MCF 10A (cell line): ENCODE measurements at regions of chr2 and their contacts with region 1.

Region 1: GRCh38 chr2:222707689-222708525 is 36.4 kb downstream of the MOGAT1 start:
- DNase-seq: peak; percentile 71
- H3K4me3 Mint-ChIP-seq: no peak overlapping the region
- H3K27ac Mint-ChIP-seq: no peak overlapping the region
- H3K4me1 Mint-ChIP-seq: peaks cover 5% of the 10 kb centered on the region
- H3K27me3 Mint-ChIP-seq: no peaks in the 10 kb centered on the region
- CTCF ChIP-seq: peak; percentile 90

Region 2: GRCh38 chr2:222232372-222232771 is 475.5 kb before region 1 on chr2:
- CTCF ChIA-PET with region 1: no interaction called
- POLR2A ChIA-PET with region 1: no interaction called
- intact Hi-C with region 1: no loop called
- DNase-seq: no peak
- H3K4me3 Mint-ChIP-seq: no peak overlapping the region
- H3K27ac Mint-ChIP-seq: no peak overlapping the region
- H3K4me1 Mint-ChIP-seq: no peaks in the 10 kb centered on the region
- H3K27me3 Mint-ChIP-seq: peaks cover 100% of the 10 kb centered on the region
- CTCF ChIP-seq: no peak

Region 3: DNA sequence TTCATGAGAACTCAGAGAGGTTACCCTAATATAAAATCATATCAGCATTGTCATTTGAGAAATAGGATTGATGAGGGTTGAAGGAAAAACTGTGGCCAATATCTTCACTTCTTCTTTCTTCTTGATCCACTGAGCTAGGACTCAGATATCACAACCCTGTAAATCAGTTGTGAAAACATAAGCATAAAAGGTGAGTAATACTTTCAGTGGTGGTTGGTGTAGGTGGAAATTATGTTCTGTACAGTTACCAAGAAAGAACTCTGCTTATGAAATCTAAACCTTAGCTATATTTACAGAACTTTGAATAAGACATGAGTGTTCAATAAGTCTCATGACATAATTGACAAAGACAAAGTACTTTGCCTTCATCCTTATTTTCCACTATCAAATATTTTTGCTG is 465.4 kb before region 1 on chr2:
- CTCF ChIA-PET with region 1: no interaction called
- POLR2A ChIA-PET with region 1: no interaction called
- intact Hi-C with region 1: no loop called
- DNase-seq: no peak
- H3K4me3 Mint-ChIP-seq: no peak overlapping the region
- H3K27ac Mint-ChIP-seq: no peak overlapping the region
- H3K4me1 Mint-ChIP-seq: no peaks in the 10 kb centered on the region
- H3K27me3 Mint-ChIP-seq: peaks cover 98% of the 10 kb centered on the region
- CTCF ChIP-seq: no peak

Region 4: GRCh38 chr2:222452422-222452950 is 255.4 kb before region 1 on chr2:
- CTCF ChIA-PET with region 1: no interaction called
- POLR2A ChIA-PET with region 1: no interaction called
- intact Hi-C with region 1: no loop called
- DNase-seq: peak; percentile 91
- H3K4me3 Mint-ChIP-seq: peak overlapping the region; percentile 28
- H3K27ac Mint-ChIP-seq: peak overlapping the region; percentile 61
- H3K4me1 Mint-ChIP-seq: peaks cover 50% of the 10 kb centered on the region
- H3K27me3 Mint-ChIP-seq: no peaks in the 10 kb centered on the region
- CTCF ChIP-seq: no peak

Region 5: GRCh38 chr2:222663479-222663878 is 44.4 kb before region 1 on chr2:
- CTCF ChIA-PET with region 1: no interaction called
- POLR2A ChIA-PET with region 1: no interaction called
- intact Hi-C with region 1: no loop called
- DNase-seq: no peak
- H3K4me3 Mint-ChIP-seq: no peak overlapping the region
- H3K27ac Mint-ChIP-seq: no peak overlapping the region
- H3K4me1 Mint-ChIP-seq: no peaks in the 10 kb centered on the region
- H3K27me3 Mint-ChIP-seq: no peaks in the 10 kb centered on the region
- CTCF ChIP-seq: no peak

Region 6: DNA sequence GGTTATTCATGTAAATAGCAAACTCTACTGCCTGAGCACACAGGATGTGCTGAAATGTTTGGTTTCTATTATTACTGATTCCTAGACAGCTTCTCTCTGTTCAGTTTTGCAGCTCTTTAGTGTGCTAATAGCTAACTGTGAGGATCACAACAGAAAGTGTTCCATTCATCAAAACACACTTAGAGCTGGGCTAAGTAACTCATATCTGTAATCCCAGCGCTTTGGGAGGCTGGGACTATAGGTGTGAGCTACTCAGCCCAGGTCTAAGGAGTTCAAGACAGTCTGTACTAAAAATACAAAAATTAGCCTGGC is 26.8 kb after region 1 on chr2:
- CTCF ChIA-PET with region 1: interaction called, 16 read pairs
- POLR2A ChIA-PET with region 1: interaction called, 3 read pairs
- intact Hi-C with region 1: no loop called
- DNase-seq: no peak
- H3K4me3 Mint-ChIP-seq: no peak overlapping the region
- H3K27ac Mint-ChIP-seq: no peak overlapping the region
- H3K4me1 Mint-ChIP-seq: peaks cover 11% of the 10 kb centered on the region
- H3K27me3 Mint-ChIP-seq: no peaks in the 10 kb centered on the region
- CTCF ChIP-seq: no peak

Region 7: DNA sequence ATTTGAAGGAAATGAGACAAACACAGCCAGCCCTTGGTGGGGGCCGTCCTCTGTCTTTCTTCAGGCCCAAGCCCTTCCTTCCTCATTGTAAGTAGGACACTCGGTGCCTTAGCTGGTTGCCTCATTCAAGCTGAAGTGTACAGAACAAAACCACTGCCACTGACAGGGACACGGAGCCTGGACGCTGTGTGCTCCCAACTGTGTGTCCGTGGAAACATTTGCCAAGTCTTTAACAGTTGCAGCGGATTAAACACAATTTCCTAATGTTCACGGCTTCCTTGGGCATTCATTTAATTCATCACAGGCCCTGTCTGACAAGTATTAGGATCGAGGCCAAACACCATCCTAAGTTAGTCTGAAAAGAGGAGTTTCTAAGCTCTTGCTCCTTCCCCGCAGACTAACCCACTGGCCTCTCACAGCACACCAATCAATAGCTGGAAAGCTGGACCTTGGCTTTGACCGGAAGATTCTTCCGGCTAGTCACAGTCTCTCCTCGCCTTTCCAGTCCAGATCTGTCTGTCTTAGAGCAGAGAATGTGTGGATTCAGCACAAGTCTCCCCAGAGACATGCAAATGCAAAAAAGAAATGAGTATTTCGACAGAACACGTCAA is 84.2 kb after region 1 on chr2:
- CTCF ChIA-PET with region 1: interaction called, 13 read pairs
- POLR2A ChIA-PET with region 1: interaction called, 3 read pairs
- intact Hi-C with region 1: loop called (anchors 5 kb)
- DNase-seq: no peak
- H3K4me3 Mint-ChIP-seq: no peak overlapping the region
- H3K27ac Mint-ChIP-seq: no peak overlapping the region
- H3K4me1 Mint-ChIP-seq: peaks cover 25% of the 10 kb centered on the region
- H3K27me3 Mint-ChIP-seq: no peaks in the 10 kb centered on the region
- CTCF ChIP-seq: no peak

Region 8: GRCh38 chr2:222797261-222797660 is 89.4 kb after region 1 on chr2:
- CTCF ChIA-PET with region 1: interaction called, 4 read pairs
- POLR2A ChIA-PET with region 1: interaction called, 3 read pairs
- intact Hi-C with region 1: loop called (anchors 5 kb)
- DNase-seq: peak; percentile 53
- H3K4me3 Mint-ChIP-seq: no peak overlapping the region
- H3K27ac Mint-ChIP-seq: no peak overlapping the region
- H3K4me1 Mint-ChIP-seq: peaks cover 18% of the 10 kb centered on the region
- H3K27me3 Mint-ChIP-seq: no peaks in the 10 kb centered on the region
- CTCF ChIP-seq: peak; percentile 46

Region 9: DNA sequence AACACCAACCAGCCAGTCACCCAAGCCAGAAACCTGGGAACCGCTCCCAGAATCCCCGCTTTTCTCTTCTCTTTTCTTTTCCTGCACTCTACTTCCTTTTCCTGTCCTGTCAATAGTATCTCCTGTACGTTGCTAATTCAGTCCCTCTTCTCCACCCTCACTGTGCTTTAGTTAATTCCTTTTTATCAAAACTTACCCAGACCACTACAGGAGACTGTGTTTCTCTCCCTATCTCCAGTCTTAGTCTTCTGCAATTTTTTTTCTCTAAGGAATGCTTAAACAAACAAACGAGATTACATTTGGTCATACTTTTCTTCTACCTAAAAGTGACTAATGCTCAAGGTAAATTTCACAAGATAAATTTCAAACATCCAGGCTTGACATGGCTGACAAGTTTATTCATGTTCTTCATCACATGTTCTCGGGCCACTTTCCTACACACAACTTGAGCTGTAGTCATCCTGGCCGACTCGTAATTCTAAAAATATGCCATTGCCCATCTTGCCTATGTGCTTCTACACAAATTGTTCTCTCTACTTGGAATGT is 129.7 kb after region 1 on chr2:
- CTCF ChIA-PET with region 1: interaction called, 20 read pairs
- POLR2A ChIA-PET with region 1: interaction called, 8 read pairs
- intact Hi-C with region 1: no loop called
- DNase-seq: peak; percentile 94
- H3K4me3 Mint-ChIP-seq: peak overlapping the region; percentile 73
- H3K27ac Mint-ChIP-seq: peak overlapping the region; percentile 93
- H3K4me1 Mint-ChIP-seq: peaks cover 39% of the 10 kb centered on the region
- H3K27me3 Mint-ChIP-seq: no peaks in the 10 kb centered on the region
- CTCF ChIP-seq: no peak

Region 10: GRCh38 chr2:222903234-222904220 is 195.6 kb after region 1 on chr2:
- CTCF ChIA-PET with region 1: interaction called, 55 read pairs
- POLR2A ChIA-PET with region 1: interaction called, 5 read pairs
- intact Hi-C with region 1: loop called (anchors 1 kb)
- DNase-seq: peak; percentile 72
- H3K4me3 Mint-ChIP-seq: no peak overlapping the region
- H3K27ac Mint-ChIP-seq: peak overlapping the region; percentile 39
- H3K4me1 Mint-ChIP-seq: peaks cover 50% of the 10 kb centered on the region
- H3K27me3 Mint-ChIP-seq: no peaks in the 10 kb centered on the region
- CTCF ChIP-seq: peak; percentile 67

Region 11: DNA sequence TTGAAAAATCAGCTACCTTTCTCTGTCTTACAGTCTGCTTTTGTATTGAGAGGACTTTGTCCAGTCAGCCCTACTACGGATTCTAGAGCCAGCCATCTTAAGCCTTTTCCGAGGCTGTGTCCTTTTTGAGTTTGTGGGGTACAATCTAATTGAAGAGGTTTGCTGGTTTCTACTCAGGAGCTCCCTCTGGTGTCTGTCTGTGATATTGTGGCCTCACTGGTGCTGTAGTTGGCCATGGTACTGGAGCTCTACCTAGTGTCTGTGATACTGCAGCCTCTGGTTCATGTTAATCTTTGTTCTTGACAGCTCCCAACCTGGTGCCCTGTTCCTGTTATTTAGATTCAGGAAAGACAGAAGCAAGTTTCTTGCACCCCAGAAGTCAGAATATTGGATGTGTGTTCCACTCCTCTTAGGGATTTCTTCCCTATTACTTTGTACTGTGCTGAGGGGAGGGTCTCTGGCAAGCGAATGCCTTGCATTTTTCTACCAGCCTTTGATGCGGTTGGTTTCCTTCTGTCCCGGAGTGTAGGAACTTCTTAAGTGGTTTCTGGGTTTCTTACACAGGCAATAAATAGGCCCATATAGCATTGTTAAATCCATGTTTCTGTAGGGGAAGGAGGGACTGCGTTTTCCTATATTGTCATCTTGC is 231.4 kb after region 1 on chr2:
- CTCF ChIA-PET with region 1: interaction called, 14 read pairs
- POLR2A ChIA-PET with region 1: interaction called, 3 read pairs
- intact Hi-C with region 1: no loop called
- DNase-seq: peak; percentile 81
- H3K4me3 Mint-ChIP-seq: no peak overlapping the region
- H3K27ac Mint-ChIP-seq: peak overlapping the region; percentile 0
- H3K4me1 Mint-ChIP-seq: peaks cover 7% of the 10 kb centered on the region
- H3K27me3 Mint-ChIP-seq: no peaks in the 10 kb centered on the region
- CTCF ChIP-seq: peak; percentile 82